ENCODE measurements at regions of chr2 and their contacts with region 1.

Region 1: DNA sequence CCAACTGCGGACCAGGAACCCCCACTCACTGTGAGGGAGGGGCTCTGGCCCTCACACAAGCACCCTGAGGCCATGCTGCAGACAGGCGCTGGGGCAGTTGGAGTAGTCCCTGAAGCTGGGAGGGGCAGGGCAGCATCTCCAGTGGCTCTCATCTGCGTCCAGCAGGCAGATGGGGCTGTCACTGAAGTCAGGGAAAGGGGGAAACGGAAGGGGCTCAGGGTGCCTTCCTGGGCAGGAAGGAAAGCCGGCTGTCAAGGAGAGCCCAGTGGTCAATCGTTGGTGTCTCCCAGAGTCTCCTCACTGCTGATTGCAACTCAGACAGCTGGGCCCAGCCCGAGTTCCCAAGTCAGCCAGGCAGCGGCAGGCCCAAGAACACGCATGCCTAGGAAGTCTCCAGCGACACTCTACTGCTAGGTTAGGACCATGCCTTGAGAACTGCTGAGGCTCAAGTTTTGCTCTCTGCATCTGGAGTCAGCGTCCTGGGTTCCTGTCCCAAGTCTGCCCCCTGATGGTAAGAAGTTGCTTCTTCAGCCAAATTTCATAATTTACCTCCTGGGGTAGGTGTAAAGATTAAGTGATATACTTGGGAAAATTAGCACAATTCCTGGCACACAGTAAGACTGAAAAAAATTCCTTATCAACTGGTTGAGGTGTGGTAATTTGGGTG is 27.5 kb upstream of the NMUR1 start:
- DNase-seq: peak in 40 of 42 donors; percentile 14 to 84 (median 57)

Region 2: DNA sequence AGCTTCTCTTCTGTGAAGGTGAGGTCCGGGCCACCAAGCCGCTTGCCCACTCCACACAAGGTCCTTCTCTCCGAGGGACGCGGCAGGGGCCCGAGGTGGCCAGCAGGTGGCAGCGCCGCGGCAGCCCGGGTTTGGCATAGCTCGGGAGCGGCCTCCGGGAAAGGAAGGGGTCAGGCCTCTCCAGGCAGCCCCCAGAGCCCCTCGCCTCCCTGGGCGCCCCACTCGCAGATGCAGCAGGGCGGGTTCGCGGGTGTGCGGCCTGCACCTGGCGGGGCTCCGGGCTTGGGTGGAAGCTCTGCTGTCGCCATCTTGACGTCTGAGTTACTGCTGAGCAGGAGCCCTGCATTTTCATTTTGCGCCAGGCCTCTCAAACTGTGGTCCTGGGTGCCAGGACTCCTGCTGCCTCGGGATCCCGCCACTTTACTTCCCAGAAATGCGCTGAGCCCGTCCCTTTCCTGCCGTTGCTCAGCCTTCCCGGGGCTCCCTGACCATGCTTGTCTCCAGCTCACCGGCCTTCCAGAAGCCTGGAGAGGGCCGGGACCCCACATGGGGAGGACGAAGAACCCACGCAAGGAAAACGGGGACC is 74.8 kb before region 1 on chr2:
- intact Hi-C with region 1: loop called (anchors 5 kb)
- DNase-seq: peak; percentile 48 to 89 (median 77)

Region 3: DNA sequence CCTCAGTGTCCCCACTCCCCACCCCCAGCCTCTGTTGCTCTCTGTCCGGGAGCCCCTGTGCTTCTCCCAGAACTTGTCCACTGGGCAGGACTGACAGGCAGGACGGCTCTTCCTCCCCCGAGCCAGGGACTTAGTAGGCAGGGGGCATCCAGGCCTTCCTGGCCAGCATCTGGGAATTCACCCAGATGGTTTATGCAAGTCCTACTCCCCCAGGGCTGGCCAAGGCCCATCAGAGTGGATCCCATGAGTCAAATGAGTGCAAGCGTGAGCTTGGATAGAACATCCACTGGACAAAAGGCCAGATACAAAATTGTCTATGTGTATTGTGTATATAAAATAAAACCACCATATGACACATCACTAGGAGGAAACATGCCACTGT is 34.9 kb before region 1 on chr2:
- intact Hi-C with region 1: loop called (anchors 5 kb)
- DNase-seq: peak in 5 of 42 donors; percentile 16 to 45 (median 31)

Measured in head of caudate nucleus (tissue), 42 donors.